PC-9 (cell line): ENCODE measurements at regions of chr2 and their contacts with region 1.

Region 1: GRCh38 chr2:11129598-11130449 is 25.4 kb upstream of the SLC66A3 start:
- DNase-seq: peak; percentile 41 to 73
- H3K4me3 ChIP-seq: peak overlapping the region; percentile 49; the same call in 1 of the 2 replicates
- H3K27ac ChIP-seq: no peak overlapping the region
- H3K4me1 ChIP-seq: peaks cover 25% of the 10 kb centered on the region
- H3K27me3 ChIP-seq: no peaks in the 10 kb centered on the region
- CTCF ChIP-seq: peak; percentile 58

Region 2: GRCh38 chr2:11154923-11155380 is 25.1 kb after region 1 on chr2:
- CTCF ChIA-PET with region 1: interaction called, 11 read pairs
- POLR2A ChIA-PET with region 1: no interaction called
- intact Hi-C with region 1: no loop called
- DNase-seq: peak; percentile 84 to 97
- H3K4me3 ChIP-seq: peak overlapping the region; percentile 61
- H3K27ac ChIP-seq: peak overlapping the region; percentile 80
- H3K4me1 ChIP-seq: peaks cover 29% of the 10 kb centered on the region
- H3K27me3 ChIP-seq: no peaks in the 10 kb centered on the region
- CTCF ChIP-seq: no peak

Region 3: DNA sequence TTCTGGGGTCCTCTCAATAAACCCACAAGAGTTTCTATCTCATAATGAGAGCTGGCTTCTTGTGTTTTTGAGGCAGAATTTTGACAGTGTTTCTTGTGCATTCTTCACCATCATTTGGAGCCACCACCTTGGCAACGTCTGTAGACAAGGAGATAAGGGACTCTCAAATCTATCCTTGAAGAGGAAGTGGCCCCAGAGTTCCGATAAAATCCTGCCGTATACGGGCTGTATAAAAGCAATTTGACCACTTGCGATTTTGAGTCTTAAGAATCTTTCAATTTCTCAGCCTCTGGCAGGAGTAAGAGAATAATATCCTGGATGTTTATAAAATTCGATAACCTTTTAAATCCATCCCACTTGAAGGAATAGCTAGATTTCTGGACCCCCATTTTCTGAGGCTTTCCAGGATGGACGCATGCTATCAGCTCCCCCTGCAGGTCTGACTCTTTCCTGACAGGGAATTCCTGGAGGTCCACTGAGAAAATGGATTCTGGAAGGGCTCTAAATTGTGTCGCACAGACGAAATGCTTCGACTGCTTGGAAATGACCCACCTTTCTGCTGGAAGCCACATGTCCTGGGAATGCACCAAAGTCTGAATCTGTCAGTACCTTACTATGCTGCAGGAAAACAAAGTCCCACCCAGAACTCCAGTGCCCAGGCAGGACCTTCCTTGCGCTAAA is 282.1 kb after region 1 on chr2:
- CTCF ChIA-PET with region 1: interaction called, 4 read pairs
- POLR2A ChIA-PET with region 1: no interaction called
- intact Hi-C with region 1: loop called (anchors 1 kb)
- DNase-seq: peak in 1 of 2 experiments; percentile 20
- H3K4me3 ChIP-seq: no peak overlapping the region
- H3K27ac ChIP-seq: no peak overlapping the region
- H3K4me1 ChIP-seq: no peaks in the 10 kb centered on the region
- H3K27me3 ChIP-seq: no peaks in the 10 kb centered on the region
- CTCF ChIP-seq: peak; percentile 74

Region 4: DNA sequence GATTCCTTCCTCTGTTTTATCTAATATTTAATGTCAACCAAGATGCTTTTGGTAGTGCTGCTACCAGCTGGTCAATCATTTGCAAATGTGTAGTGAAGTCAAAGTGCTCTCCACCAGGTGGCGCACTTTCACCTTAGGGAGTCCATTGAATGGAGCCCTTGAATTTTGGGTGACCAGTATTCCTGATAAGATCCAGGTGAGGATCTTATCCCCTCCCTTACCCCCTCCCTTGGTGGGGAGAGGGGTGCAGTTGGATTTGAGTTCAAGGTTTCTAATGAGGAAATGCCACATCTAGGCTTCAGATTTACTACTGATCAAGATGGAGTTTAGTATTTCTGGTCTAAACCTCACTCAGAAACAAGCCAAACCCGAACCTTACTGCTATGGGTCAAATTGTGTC is 348.2 kb after region 1 on chr2:
- CTCF ChIA-PET with region 1: no interaction called
- POLR2A ChIA-PET with region 1: no interaction called
- intact Hi-C with region 1: loop called (anchors 2 kb)
- DNase-seq: peak; percentile 53 to 72
- H3K4me3 ChIP-seq: no peak overlapping the region
- H3K27ac ChIP-seq: no peak overlapping the region
- H3K4me1 ChIP-seq: no peaks in the 10 kb centered on the region
- H3K27me3 ChIP-seq: no peaks in the 10 kb centered on the region
- CTCF ChIP-seq: peak; percentile 97

Region 5: GRCh38 chr2:11688222-11689069 is 558.6 kb after region 1 on chr2:
- CTCF ChIA-PET with region 1: no interaction called
- POLR2A ChIA-PET with region 1: no interaction called
- intact Hi-C with region 1: loop called (anchors 5 kb)
- DNase-seq: peak; percentile 78 to 90
- H3K4me3 ChIP-seq: peak overlapping the region; percentile 53
- H3K27ac ChIP-seq: peak overlapping the region; percentile 82
- H3K4me1 ChIP-seq: peaks cover 42% of the 10 kb centered on the region
- H3K27me3 ChIP-seq: no peaks in the 10 kb centered on the region
- CTCF ChIP-seq: peak; percentile 99